ENCODE measurements at regions of chr14 and their contacts with region 1.

Region 1: DNA sequence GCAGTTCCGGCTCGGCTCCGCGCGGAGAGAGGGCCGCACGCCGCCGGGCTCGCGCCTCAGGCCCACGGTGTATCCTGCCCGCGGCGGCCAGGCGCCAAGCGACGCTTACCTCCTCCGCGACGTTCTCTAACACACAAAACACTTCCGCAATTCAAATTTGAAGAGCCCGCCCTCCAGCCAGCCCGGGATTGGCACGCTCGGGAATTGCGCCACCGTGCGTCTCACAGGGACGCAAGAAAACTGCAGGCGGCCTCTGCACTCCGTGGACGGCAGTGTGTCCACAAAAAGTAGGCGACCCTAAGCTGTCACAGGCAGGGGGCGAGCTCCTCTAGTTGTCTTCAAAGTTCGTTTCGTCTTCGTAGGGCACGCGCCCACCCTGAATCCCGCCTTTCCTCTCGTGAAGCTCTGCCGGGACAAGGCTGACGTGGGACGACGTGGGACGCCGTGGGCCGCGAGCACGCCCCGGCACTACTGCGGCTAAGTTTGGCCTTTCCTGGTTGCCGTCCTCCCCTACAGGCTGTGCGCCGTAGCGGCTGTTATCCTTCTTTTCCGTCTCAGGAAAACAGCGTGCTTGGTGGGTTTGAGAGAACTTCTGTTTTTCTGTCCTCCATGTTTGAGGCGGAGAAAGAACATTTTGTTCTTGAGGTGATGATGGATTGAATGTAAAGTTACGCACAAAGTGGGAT is at the start of gene MIS18BP1:
- DNase-seq: peak; percentile 82 to 96 (median 92)
- ATAC-seq: peak; percentile 88 to 96 (median 88)
- H3K4me3 ChIP-seq: peak within 1 kb of the TSS; percentile 83 to 84
- H3K4me3 Mint-ChIP-seq: peak within 1 kb of the TSS; percentile 89 to 93 (median 91)
- H3K27ac ChIP-seq: peak within 1 kb of the TSS; percentile 85
- H3K27ac Mint-ChIP-seq: peak within 1 kb of the TSS; percentile 93 to 95
- H3K4me1 ChIP-seq: peaks cover 21 to 23% of the 10 kb centered on the region in 2 experiments
- H3K4me1 Mint-ChIP-seq: peaks cover 20 to 34% (median 24%) of the 10 kb centered on the region in 3 donors
- H3K27me3 ChIP-seq: no peaks in the 10 kb centered on the region
- H3K27me3 Mint-ChIP-seq: no peaks in the 10 kb centered on the region
- total RNA-seq, gene MIS18BP1: 20.8 to 34.0 (median 27.6) TPM

Region 2: DNA sequence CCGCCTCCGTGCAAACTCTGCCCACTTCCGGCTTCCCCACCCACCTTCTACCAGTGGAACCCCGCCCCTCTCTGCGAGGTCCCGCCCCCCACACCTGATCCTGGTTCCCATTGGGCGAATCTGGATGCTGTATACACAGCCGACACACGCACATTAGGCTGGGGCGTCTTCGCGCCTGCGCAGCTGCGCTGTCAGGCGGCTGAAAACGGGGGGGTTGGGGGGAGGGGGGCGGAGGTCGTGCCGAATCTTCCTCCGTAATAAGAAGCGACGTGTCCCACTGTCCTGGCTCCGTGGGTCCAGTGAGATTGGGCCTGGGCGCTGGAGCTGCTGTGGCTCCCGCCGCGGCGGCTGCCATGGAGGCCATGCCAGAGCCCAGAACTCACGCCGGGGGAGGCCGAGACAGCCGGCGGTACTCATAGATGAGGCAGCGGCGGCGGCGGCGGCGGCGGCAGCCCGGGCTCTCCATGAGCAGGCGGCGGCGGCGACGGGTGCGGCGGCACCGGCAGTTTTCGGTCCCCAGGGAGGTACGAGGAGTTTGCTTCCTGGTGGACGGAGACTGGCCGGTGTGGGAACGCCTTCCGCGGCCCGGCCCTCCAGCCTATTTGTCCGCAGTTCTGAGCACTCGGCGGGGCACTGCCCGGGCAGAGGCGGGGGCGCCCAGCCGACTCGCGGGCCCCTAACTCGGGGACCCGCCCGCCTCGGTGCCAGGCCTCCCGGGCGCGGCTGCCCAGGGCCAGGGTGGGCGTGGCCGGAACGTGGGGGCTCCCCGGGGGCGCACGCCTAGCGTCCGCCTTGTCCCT is 356.0 kb before region 1 on chr14:
- CTCF ChIA-PET with region 1: interaction called in 1 of 2 experiments, 9 read pairs
- POLR2A ChIA-PET with region 1: interaction called, 6 to 11 read pairs
- DNase-seq: peak; percentile 83 to 99 (median 98)
- ATAC-seq: peak; percentile 97 to 98 (median 98)
- H3K4me3 ChIP-seq: peak overlapping the region; percentile 71 to 76
- H3K4me3 Mint-ChIP-seq: peak overlapping the region; percentile 80 to 93 (median 90)
- H3K27ac ChIP-seq: peak overlapping the region; percentile 84
- H3K27ac Mint-ChIP-seq: peak overlapping the region; percentile 93 to 94
- H3K4me1 ChIP-seq: peaks cover 0 to 9% of the 10 kb centered on the region in 2 experiments
- H3K4me1 Mint-ChIP-seq: peaks cover 13 to 36% (median 26%) of the 10 kb centered on the region in 3 donors
- H3K27me3 ChIP-seq: no peaks in the 10 kb centered on the region
- H3K27me3 Mint-ChIP-seq: no peaks in the 10 kb centered on the region

Region 3: DNA sequence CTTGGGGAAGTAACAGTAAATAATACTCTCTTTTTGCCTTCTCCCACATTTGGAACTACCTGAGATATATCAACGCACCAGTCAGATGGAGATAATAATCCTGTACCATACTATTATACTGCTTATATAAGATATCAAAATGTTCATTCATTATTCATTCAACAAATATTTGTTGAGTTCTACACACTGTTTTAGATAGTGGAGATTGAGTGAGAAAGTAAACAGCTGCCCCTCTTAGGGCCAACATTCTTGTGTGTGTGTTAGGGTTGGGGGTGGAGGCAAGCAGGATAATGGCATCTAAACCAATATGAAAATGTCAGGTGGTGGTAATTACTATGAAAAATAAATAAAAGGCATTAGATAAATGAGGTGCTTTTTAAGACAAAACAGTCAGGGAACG is 14.2 kb before region 1 on chr14:
- CTCF ChIA-PET with region 1: interaction called in 1 of 2 experiments, 7 read pairs
- POLR2A ChIA-PET with region 1: interaction called, 4 to 10 read pairs
- DNase-seq: no peak
- ATAC-seq: no peak
- H3K4me3 ChIP-seq: no peak overlapping the region
- H3K4me3 Mint-ChIP-seq: no peak overlapping the region
- H3K27ac ChIP-seq: no peak overlapping the region
- H3K27ac Mint-ChIP-seq: no peak overlapping the region
- H3K4me1 ChIP-seq: no peaks in the 10 kb centered on the region
- H3K4me1 Mint-ChIP-seq: peaks cover 0 to 2% (median 0%) of the 10 kb centered on the region in 3 donors
- H3K27me3 ChIP-seq: no peaks in the 10 kb centered on the region
- H3K27me3 Mint-ChIP-seq: no peaks in the 10 kb centered on the region

Region 4: DNA sequence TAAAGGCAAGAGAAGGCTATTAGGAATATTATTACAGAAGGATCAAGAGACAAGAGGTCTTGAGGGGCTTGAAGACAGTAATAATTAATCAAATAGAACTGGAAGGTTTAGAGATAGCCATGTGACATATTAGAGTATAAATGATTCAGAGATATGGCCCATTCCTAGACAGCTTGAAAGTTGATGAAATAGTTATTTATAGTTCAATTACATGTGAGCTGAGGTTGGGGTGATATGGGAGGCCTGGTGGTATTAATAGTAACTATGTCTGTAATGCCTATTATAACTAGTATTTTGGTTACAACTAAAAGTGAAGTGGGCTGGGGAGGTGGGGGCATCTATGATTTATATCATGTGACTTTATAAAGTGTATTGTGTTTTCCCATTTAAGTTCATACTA is 13.9 kb after region 1 on chr14:
- CTCF ChIA-PET with region 1: interaction called, 7 to 19 read pairs
- POLR2A ChIA-PET with region 1: interaction called in 1 of 2 experiments, 6 read pairs
- DNase-seq: no peak
- ATAC-seq: no peak
- H3K4me3 ChIP-seq: no peak overlapping the region
- H3K4me3 Mint-ChIP-seq: no peak overlapping the region
- H3K27ac ChIP-seq: no peak overlapping the region
- H3K27ac Mint-ChIP-seq: no peak overlapping the region
- H3K4me1 ChIP-seq: no peaks in the 10 kb centered on the region
- H3K4me1 Mint-ChIP-seq: no peaks in the 10 kb centered on the region
- H3K27me3 ChIP-seq: no peaks in the 10 kb centered on the region
- H3K27me3 Mint-ChIP-seq: peaks cover 0 to 5% of the 10 kb centered on the region in 2 donors

Region 5: DNA sequence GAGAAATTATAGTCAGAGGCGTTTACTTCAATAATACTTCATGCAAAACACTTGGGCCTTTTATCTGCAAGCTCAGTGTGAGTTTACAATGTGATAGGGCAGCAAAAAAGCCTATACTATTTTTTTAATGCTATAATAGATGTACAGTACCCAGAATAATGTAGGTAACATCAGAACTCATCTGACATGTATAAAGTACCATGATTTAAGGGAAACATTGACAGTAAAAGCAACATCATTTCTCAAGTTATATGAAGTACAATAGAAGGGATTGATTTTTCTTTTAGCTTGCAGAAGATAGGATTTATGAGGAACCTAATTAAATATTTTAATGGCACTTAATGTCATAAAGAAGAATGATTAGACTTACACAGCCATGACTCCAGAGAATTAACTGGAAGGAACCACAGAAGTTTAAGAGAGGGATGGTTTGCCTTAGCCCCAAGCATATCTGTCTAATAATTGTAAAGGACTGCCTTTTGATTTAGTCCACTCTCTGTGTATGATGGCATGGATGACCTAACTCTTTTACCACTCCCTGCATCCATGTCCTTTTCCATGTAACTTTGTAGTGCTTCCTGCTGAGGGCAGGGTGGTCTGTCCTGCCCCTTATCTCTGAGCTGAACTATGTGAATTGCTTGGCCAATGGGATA is 55.7 kb after region 1 on chr14:
- CTCF ChIA-PET with region 1: no interaction called
- POLR2A ChIA-PET with region 1: no interaction called
- DNase-seq: no peak
- ATAC-seq: no peak
- H3K4me3 ChIP-seq: no peak overlapping the region
- H3K4me3 Mint-ChIP-seq: no peak overlapping the region
- H3K27ac ChIP-seq: no peak overlapping the region
- H3K27ac Mint-ChIP-seq: no peak overlapping the region
- H3K4me1 ChIP-seq: no peaks in the 10 kb centered on the region
- H3K4me1 Mint-ChIP-seq: no peaks in the 10 kb centered on the region
- H3K27me3 ChIP-seq: peaks cover 0 to 14% of the 10 kb centered on the region in 2 experiments
- H3K27me3 Mint-ChIP-seq: peaks cover 3 to 26% of the 10 kb centered on the region in 2 donors

Region 6: DNA sequence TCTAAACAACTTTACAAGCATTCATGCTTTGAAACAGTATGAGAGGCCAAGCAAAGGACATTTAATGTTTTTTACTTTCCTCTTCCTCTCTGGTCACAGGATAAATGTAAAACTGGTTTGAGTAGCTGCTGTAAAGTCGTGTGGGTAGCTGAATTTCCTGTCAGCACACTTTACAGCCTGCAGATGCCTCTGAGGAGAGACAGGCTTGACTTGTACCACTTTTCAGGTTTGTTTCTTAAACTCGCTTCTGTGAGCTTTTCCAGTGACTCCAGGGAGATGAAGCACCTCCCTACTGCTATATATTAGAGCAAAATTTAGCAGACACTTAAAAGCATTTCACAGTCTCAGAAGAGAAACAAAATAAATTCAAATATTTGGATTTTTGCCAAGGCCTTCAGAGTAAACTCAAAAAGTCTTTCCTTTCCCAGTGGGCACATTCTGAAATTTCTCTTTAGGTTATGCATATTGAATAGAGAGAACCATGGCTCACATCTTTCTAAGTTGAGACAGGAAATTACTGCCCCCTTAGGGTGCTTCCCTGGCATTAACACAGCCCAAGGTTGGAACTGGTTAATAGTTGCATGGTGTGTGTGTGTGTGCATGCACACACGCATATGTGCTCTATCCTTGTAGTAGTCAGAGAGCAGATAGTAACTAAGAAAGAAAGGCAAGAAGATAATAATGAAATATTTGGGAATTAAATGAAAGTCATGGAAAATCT is 557.1 kb after region 1 on chr14:
- CTCF ChIA-PET with region 1: no interaction called
- POLR2A ChIA-PET with region 1: no interaction called
- DNase-seq: no peak
- ATAC-seq: no peak
- H3K4me3 ChIP-seq: no peak overlapping the region
- H3K4me3 Mint-ChIP-seq: no peak overlapping the region
- H3K27ac ChIP-seq: no peak overlapping the region
- H3K27ac Mint-ChIP-seq: no peak overlapping the region
- H3K4me1 ChIP-seq: no peaks in the 10 kb centered on the region
- H3K4me1 Mint-ChIP-seq: no peaks in the 10 kb centered on the region
- H3K27me3 ChIP-seq: no peaks in the 10 kb centered on the region
- H3K27me3 Mint-ChIP-seq: no peaks in the 10 kb centered on the region